Gastrocnemius medialis (tissue), 4 donors: ENCODE measurements at regions of chr19 and their contacts with region 1.

Region 1: DNA sequence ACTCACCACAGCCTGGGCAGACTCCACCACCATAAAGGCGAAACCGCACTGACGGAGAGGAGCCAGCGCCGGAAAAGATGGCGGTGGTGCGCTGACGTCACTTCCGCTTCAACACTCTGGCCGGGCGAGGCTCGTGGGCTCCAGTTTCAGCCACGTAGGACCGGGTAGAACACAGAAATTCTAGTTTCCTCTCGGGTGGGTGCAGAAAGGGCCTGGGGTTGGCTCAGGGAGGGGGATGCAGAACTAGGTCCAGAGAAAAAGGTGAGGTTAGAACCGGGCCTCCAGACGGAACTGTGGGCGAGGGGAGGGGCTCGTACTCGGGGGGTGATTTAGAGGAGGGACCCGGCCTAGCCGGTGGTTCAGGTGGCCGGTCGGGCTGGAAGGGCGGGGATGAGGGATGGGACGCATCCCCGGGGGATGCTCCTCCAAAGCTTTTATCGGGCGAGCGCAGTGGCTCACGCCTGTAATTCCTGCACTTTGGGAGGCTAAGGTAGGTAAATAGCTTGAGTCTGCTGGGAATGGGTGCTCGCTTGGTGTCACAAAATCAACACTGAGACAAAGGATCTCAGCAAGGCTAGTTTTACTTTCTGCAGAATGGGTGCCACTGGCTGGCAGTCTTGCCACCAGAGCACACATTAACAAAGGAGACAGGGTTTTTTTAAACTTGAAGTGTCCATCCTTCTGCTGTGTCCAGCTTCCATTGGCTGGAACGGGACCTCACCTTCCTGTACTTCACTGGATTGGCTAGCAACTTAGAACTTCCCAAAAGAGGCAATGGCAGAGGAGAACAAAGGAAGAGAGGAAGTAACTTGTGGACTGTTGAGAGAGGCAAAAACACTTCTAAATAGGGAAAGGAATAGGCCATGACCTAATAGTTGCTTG is at the start of gene ZNF561:
- DNase-seq: peak; percentile 70
- ATAC-seq: peak; percentile 96 to 98
- H3K4me3 ChIP-seq: peak within 1 kb of the TSS; percentile 70 to 96 (median 86)
- H3K27ac ChIP-seq: peak within 1 kb of the TSS; percentile 82 to 92 (median 90)
- H3K4me1 ChIP-seq: peaks cover 14 to 22% of the 10 kb centered on the region in 2 donors
- H3K27me3 ChIP-seq: no peaks in the 10 kb centered on the region
- CTCF ChIP-seq: no peak
- POLR2A ChIP-seq: no peak
- total RNA-seq, gene ZNF561: 8.7 to 17.5 (median 14.4) TPM

Region 2: GRCh38 chr19:9538183-9539058 is 83.0 kb before region 1 on chr19 and contains the start of gene ZNF426:
- in situ Hi-C with region 1: no loop called
- intact Hi-C with region 1: loop called (anchors 1 kb)
- DNase-seq: peak; percentile 51 to 67
- ATAC-seq: peak; percentile 89 to 98
- H3K4me3 ChIP-seq: peak within 1 kb of the TSS; percentile 73 to 83 (median 78)
- H3K27ac ChIP-seq: peak within 1 kb of the TSS; percentile 79 to 91 (median 86)
- H3K4me1 ChIP-seq: peaks cover 0 to 5% of the 10 kb centered on the region in 2 donors
- H3K27me3 ChIP-seq: no peaks in the 10 kb centered on the region
- CTCF ChIP-seq: no peak
- POLR2A ChIP-seq: peak; percentile 11 to 25
- total RNA-seq, gene ZNF426: 3.2 to 4.8 (median 3.8) TPM

Region 3: GRCh38 chr19:9674663-9675357 is 53.4 kb after region 1 on chr19 and contains the start of gene ZNF562:
- in situ Hi-C with region 1: no loop called
- intact Hi-C with region 1: loop called (anchors 2 kb)
- DNase-seq: peak; percentile 36 to 57
- ATAC-seq: peak; percentile 84 to 92
- H3K4me3 ChIP-seq: peak within 1 kb of the TSS; percentile 66 to 90 (median 70)
- H3K27ac ChIP-seq: peak within 1 kb of the TSS; percentile 81 to 88 (median 86)
- H3K4me1 ChIP-seq: no peaks in the 10 kb centered on the region
- H3K27me3 ChIP-seq: no peaks in the 10 kb centered on the region
- CTCF ChIP-seq: no peak
- POLR2A ChIP-seq: peak in 1 of 2 donors; percentile 34
- total RNA-seq, gene ZNF562: 3.0 to 8.1 (median 6.6) TPM